ENCODE measurements at regions of chr13 and their contacts with region 1.

Region 1: DNA sequence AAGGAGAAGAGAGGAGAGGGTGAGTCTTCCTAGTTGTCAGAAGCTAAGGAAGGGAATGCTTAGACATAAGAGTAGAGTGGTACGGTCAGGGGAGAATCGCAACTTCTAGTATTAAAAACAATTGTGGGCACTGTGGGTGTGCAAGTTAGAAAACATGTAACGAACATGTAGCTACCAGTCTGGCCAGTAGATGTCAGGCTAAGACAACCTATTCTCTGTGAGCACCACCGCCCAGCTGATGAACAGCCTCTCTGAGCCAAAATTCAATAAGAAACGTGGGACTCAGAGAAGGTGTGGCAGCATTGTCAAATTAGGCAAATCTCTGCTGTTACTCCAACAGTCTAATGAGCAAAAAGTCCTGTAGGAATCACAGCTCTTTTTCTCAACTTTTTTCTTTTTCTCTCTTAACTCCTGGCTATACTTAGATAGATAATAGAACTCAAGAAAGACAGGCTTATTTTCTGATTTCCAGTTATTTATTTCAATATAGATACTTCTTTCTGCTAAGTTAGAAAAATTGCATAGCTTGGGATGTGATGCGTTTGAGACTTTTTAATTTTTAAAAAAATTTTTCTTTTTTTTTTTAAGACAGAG is 186.2 kb downstream of the USP12 start:
- DNase-seq: peak; percentile 85
- H3K4me3 Mint-ChIP-seq: no peak overlapping the region
- H3K27ac Mint-ChIP-seq: no peak overlapping the region
- H3K4me1 Mint-ChIP-seq: peaks cover 18% of the 10 kb centered on the region
- H3K27me3 Mint-ChIP-seq: peaks cover 7% of the 10 kb centered on the region
- CTCF ChIP-seq: peak; percentile 81

Region 2: DNA sequence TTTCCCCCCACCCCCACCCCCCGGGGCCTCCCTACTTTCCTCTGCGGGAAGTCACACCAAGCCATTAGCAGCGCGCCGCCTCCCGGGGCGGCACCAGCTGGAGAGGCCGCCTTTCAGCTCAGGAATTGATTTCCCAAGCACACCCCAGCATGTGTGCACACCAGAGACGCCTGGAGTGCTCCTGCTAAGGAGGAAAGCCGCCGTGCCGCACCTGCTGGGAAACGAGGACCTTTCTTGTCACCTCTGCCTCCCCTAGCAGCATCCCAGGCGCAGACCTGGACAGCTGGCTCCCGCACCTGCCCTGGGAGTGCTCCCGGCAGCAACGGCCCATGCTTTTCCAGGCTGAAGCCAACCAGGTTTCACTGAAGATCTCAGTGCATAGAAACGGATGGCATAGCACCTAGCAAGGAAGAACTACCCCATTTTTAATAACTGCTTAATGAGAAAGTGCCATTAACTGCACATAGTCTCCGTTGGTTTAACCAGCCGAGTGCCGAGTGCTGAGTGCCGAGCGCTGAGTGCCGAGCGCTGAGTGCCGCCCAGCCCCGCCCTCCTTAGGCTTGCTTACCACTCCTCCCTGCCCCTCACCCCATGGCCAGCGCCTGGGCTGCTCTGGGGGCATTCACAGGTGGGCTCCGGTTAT is 21.3 kb after region 1 on chr13:
- CTCF ChIA-PET with region 1: interaction called, 24 read pairs
- POLR2A ChIA-PET with region 1: no interaction called
- intact Hi-C with region 1: no loop called
- DNase-seq: peak; percentile 41
- H3K4me3 Mint-ChIP-seq: peak overlapping the region; percentile 55
- H3K27ac Mint-ChIP-seq: no peak overlapping the region
- H3K4me1 Mint-ChIP-seq: no peaks in the 10 kb centered on the region
- H3K27me3 Mint-ChIP-seq: peaks cover 15% of the 10 kb centered on the region
- CTCF ChIP-seq: no peak

Region 3: GRCh38 chr13:27171827-27172494 is 186.6 kb after region 1 on chr13:
- CTCF ChIA-PET with region 1: interaction called, 5 read pairs
- POLR2A ChIA-PET with region 1: interaction called, 12 read pairs
- intact Hi-C with region 1: loop called (anchors 5 kb)
- DNase-seq: peak; percentile 83
- H3K4me3 Mint-ChIP-seq: peak overlapping the region; percentile 78
- H3K27ac Mint-ChIP-seq: peak overlapping the region; percentile 72
- H3K4me1 Mint-ChIP-seq: peaks cover 37% of the 10 kb centered on the region
- H3K27me3 Mint-ChIP-seq: no peaks in the 10 kb centered on the region
- CTCF ChIP-seq: no peak

Region 4: DNA sequence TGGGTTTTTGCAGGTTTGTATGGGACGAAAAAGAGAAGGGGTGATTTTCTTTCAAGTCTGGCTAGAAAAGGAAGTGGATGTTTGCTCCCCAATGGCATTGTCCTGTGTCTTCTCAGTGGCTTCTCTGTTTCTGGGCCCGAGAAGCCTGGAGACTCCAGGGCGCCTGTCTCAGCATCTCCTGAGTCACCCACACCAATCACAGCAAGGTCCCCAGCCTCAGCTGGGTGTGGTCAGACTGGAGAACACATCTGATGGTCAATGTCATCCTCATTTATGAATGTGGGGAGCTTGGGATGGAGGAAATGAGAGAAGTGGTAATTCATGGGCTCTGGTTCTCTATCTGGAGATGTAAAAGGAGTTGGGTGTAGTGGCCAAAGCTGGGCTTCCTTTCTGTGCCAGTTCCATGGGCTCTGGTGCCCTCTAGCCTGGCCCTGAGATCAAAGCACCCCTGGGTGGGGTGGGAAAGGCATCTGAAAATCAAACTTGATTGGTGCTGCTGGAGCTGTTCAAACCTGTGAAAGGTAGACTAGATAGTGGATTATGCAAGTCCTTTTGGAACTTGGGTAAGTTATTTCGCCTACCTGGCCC is 298.6 kb after region 1 on chr13:
- CTCF ChIA-PET with region 1: interaction called, 8 read pairs
- POLR2A ChIA-PET with region 1: interaction called, 5 read pairs
- intact Hi-C with region 1: loop called (anchors 2 kb)
- DNase-seq: peak; percentile 56
- H3K4me3 Mint-ChIP-seq: no peak overlapping the region
- H3K27ac Mint-ChIP-seq: no peak overlapping the region
- H3K4me1 Mint-ChIP-seq: no peaks in the 10 kb centered on the region
- H3K27me3 Mint-ChIP-seq: no peaks in the 10 kb centered on the region
- CTCF ChIP-seq: no peak

Region 5: DNA sequence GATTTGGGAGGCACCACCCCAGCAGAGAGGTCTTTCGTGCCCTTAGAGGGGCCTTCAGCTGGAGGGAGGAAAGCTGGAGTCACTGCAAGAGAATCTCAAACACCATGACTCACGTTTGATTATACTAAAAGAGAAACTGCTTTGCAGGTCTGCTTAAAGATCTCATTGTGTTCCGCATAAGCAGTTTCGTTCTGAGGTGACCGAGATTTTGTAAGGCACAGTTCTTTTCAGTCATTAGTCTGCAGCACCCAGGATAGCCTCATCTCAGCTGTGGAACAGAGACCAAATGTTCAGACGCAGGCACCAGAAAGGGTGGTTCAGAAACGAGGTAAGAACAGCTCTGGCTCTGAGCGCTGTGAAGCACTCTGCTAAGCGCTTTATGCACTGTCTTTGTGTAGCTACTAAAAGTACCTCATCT is 367.8 kb after region 1 on chr13:
- CTCF ChIA-PET with region 1: interaction called, 177 read pairs
- POLR2A ChIA-PET with region 1: interaction called, 6 read pairs
- intact Hi-C with region 1: no loop called
- DNase-seq: no peak
- H3K4me3 Mint-ChIP-seq: no peak overlapping the region
- H3K27ac Mint-ChIP-seq: no peak overlapping the region
- H3K4me1 Mint-ChIP-seq: no peaks in the 10 kb centered on the region
- H3K27me3 Mint-ChIP-seq: peaks cover 6% of the 10 kb centered on the region
- CTCF ChIP-seq: no peak